HepG2 (cell line): ENCODE measurements at regions of chr5 and their contacts with region 1.

Region 1: GRCh38 chr5:131263648-131264450 is at the start of gene CDC42SE2:
- DNase-seq: peak; percentile 66
- ATAC-seq: peak; percentile 97
- H3K4me3 ChIP-seq: peak within 1 kb of the TSS; percentile 94 to 99 (median 96)
- H3K27ac ChIP-seq: peak within 1 kb of the TSS; percentile 92
- H3K4me1 ChIP-seq: peaks cover 32% of the 10 kb centered on the region
- H3K27me3 ChIP-seq: no peaks in the 10 kb centered on the region; a peak in 1 of 5 replicates
- CTCF ChIP-seq: no peak
- EP300 ChIP-seq: no peak; a peak in 1 of 4 replicates
- POLR2A ChIP-seq: peak; percentile 89 to 92
- RAD21 ChIP-seq: peak; percentile 54; the same call in 1 of the 2 replicates
- total RNA-seq, gene CDC42SE2: 25.0 and 40.7 TPM in 2 replicates

Region 2: DNA sequence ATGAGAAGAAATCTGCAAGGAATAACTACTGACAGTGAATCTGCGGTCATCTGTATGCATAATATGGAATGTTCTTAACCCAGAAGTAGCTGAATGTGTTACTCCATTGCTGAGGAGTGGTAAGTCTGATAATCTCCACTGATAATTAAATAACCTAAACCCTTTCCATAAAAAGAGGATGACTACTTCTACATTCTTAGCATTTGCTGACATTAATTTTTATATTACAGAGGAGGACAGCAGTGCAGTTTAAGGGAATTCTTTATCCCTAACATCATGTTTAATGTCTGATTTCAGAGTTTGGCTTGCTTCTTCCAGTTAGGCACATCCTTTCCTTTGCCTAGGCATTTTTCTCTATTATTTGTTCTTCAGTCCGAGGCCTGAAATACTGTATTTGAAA is 52.2 kb after region 1 on chr5:
- CTCF ChIA-PET with region 1: no interaction called
- POLR2A ChIA-PET with region 1: interaction called, 20 read pairs
- in situ Hi-C with region 1: no loop called
- intact Hi-C with region 1: no loop called
- DNase-seq: no peak
- ATAC-seq: no peak
- H3K4me3 ChIP-seq: no peak overlapping the region
- H3K27ac ChIP-seq: no peak overlapping the region
- H3K4me1 ChIP-seq: peaks cover 29% of the 10 kb centered on the region
- H3K27me3 ChIP-seq: no peaks in the 10 kb centered on the region
- CTCF ChIP-seq: no peak
- EP300 ChIP-seq: no peak
- POLR2A ChIP-seq: no peak
- RAD21 ChIP-seq: no peak